ENCODE measurements at regions of chr13 and their contacts with region 1.

Region 1: GRCh38 chr13:26946684-26947343 is 186.2 kb upstream of the GPR12 start:
- DNase-seq: no peak
- H3K4me3 ChIP-seq: no peak overlapping the region
- H3K27ac ChIP-seq: no peak overlapping the region
- H3K4me1 ChIP-seq: peaks cover 0 to 3% (median 0%) of the 10 kb centered on the region in 4 experiments; a peak in 1 of 7 replicates
- H3K27me3 ChIP-seq: no peaks in the 10 kb centered on the region
- CTCF ChIP-seq: peak in 2 of 3 experiments; percentile 71 to 82; a peak in 3 of 4 replicates
- EP300 ChIP-seq: no peak
- POLR2A ChIP-seq: no peak
- RAD21 ChIP-seq: peak; percentile 94 to 96

Region 2: DNA sequence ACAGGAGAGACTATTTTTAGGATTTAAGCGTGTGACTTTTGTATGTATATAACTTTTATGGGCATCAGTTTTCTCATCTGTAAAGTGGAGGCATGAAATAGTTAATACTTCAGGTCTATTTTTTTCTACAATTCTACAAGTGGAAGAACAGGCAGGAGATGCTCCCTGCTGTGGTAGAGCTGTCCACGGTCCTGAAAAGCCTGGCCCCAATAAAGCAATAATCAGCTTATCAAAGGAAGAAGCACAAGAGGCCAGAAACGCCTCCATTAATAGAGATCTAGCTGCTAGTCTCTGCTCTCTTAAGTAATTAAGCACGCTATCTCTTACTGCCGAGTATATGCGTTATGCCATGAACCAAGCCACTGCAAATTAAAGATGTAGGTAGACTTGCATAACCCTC is 417.4 kb before region 1 on chr13:
- CTCF ChIA-PET with region 1: no interaction called
- POLR2A ChIA-PET with region 1: no interaction called
- DNase-seq: peak; percentile 43 to 84
- H3K4me3 ChIP-seq: no peak overlapping the region
- H3K27ac ChIP-seq: no peak overlapping the region
- H3K4me1 ChIP-seq: peaks cover 0 to 8% (median 1%) of the 10 kb centered on the region in 4 experiments; a peak in 2 of 7 replicates
- H3K27me3 ChIP-seq: no peaks in the 10 kb centered on the region
- CTCF ChIP-seq: no peak
- EP300 ChIP-seq: no peak
- POLR2A ChIP-seq: no peak
- RAD21 ChIP-seq: no peak

Region 3: GRCh38 chr13:26908126-26908525 is 38.7 kb before region 1 on chr13:
- CTCF ChIA-PET with region 1: no interaction called
- POLR2A ChIA-PET with region 1: no interaction called
- DNase-seq: no peak
- H3K4me3 ChIP-seq: no peak overlapping the region
- H3K27ac ChIP-seq: no peak overlapping the region
- H3K4me1 ChIP-seq: no peaks in the 10 kb centered on the region
- H3K27me3 ChIP-seq: no peaks in the 10 kb centered on the region; a peak in 1 of 7 replicates
- CTCF ChIP-seq: no peak
- EP300 ChIP-seq: no peak
- POLR2A ChIP-seq: no peak
- RAD21 ChIP-seq: no peak

Region 4: GRCh38 chr13:26957182-26957581 is 10.4 kb after region 1 on chr13:
- CTCF ChIA-PET with region 1: interaction called, 12 read pairs
- POLR2A ChIA-PET with region 1: interaction called, 3 read pairs
- DNase-seq: no peak
- H3K4me3 ChIP-seq: no peak overlapping the region
- H3K27ac ChIP-seq: no peak overlapping the region
- H3K4me1 ChIP-seq: no peaks in the 10 kb centered on the region
- H3K27me3 ChIP-seq: no peaks in the 10 kb centered on the region
- CTCF ChIP-seq: no peak
- EP300 ChIP-seq: no peak
- POLR2A ChIP-seq: no peak
- RAD21 ChIP-seq: no peak

Region 5: DNA sequence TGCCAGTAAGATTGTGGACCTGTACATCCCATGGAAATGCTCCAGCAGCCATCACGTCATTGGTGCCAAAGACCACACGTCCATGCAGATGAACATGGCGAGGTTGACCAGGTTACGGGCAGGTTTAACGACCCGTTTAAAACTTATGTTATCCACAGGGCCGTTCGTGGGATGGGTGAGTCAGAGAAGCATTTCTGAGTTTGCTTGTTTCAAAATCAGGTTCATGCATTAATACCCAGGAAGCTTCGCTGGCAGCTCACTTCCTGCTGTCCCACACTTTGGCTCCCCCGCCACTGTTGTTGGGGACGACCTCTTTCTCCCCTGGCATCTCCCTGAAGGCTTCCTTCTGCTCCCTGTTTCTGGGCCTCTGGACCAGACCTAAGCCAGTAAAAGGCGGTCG is 30.7 kb after region 1 on chr13:
- CTCF ChIA-PET with region 1: interaction called, 24 read pairs
- POLR2A ChIA-PET with region 1: no interaction called
- DNase-seq: no peak
- H3K4me3 ChIP-seq: no peak overlapping the region
- H3K27ac ChIP-seq: no peak overlapping the region
- H3K4me1 ChIP-seq: no peaks in the 10 kb centered on the region; a peak in 2 of 7 replicates
- H3K27me3 ChIP-seq: no peaks in the 10 kb centered on the region
- CTCF ChIP-seq: no peak
- EP300 ChIP-seq: no peak
- POLR2A ChIP-seq: no peak
- RAD21 ChIP-seq: no peak

Region 6: DNA sequence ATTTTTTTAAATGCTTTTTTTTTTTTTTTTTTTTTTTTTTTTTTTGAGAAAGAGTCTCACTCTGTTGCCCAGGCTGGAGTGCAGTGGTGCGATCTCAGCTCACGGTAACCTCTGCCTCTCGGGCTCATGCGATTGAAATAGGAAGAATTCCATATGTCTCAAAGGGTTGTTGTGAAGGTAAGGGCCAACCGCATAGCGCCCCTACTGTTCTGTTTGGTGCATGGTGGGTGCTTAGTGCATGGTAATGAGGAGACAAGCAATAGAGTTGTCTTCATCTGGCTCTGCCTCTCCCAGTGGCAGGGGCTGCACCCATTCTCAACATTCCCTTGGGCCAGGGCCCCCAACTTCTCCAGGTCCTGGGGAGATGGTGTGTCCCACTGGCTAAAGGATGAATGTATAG is 392.5 kb after region 1 on chr13:
- CTCF ChIA-PET with region 1: interaction called, 10 read pairs
- POLR2A ChIA-PET with region 1: no interaction called
- DNase-seq: peak in 1 of 2 experiments; percentile 77
- H3K4me3 ChIP-seq: no peak overlapping the region; a peak in 1 of 8 replicates
- H3K27ac ChIP-seq: no peak overlapping the region
- H3K4me1 ChIP-seq: peaks cover 7 to 22% (median 11%) of the 10 kb centered on the region in 4 experiments
- H3K27me3 ChIP-seq: peaks cover 0 to 3% (median 1%) of the 10 kb centered on the region in 4 experiments; a peak in 2 of 7 replicates
- CTCF ChIP-seq: peak; percentile 64 to 81 (median 70)
- EP300 ChIP-seq: no peak
- POLR2A ChIP-seq: no peak
- RAD21 ChIP-seq: peak; percentile 53

Measured in H1 (cell line).